Caco-2 (cell line): ENCODE measurements at regions of chr2 and their contacts with region 1.

Region 1: DNA sequence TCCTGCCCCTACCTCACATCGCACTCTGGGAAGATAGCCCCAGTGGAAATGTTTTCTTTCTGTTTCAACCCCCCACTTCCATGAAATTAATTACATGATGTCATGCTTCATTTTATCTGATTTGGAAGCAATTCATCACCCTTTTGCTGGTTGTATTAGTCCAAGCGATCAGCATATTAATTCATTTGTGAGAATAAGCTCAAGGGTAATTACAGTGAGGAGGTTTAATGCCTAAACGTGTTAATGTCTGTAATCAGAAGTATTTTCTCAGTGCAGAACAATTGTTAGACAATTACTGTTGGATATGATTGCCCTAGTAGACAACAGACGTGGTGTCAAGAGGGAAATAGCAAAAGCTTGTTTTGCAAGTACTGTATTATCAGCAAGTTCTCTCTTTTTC is 746.3 kb downstream of the CPS1 start:
- DNase-seq: no peak
- H3K4me3 ChIP-seq: no peak overlapping the region
- H3K4me3 Mint-ChIP-seq: no peak overlapping the region
- H3K27ac Mint-ChIP-seq: no peak overlapping the region
- H3K4me1 ChIP-seq: peaks cover 33% of the 10 kb centered on the region
- H3K4me1 Mint-ChIP-seq: peaks cover 17% of the 10 kb centered on the region
- H3K27me3 ChIP-seq: no peaks in the 10 kb centered on the region
- H3K27me3 Mint-ChIP-seq: no peaks in the 10 kb centered on the region
- CTCF ChIP-seq: no peak

Region 2: DNA sequence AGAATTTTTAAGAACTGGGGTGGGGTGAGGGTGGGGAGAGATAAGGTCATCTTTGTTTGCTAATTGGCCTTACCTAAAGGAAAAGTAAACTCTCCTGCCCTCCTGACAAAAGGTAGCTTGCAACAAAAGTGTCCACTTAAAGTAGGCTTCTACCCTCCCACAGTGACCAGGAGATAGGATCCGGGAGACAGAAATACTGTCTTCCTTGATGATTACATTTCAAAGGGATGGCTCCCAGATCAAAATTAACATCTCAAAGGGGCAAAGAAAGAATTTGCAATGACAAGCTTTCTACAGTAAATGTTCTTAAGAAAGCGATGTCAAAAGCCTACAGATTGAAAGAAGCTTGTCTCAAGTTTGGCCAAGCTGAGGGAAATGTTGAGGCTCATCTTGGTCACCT is 29.1 kb after region 1 on chr2:
- CTCF ChIA-PET with region 1: interaction called, 11 read pairs
- POLR2A ChIA-PET with region 1: no interaction called
- intact Hi-C with region 1: no loop called
- DNase-seq: peak in 1 of 2 experiments; percentile 12
- H3K4me3 ChIP-seq: no peak overlapping the region
- H3K4me3 Mint-ChIP-seq: no peak overlapping the region
- H3K27ac Mint-ChIP-seq: no peak overlapping the region
- H3K4me1 ChIP-seq: peaks cover 5% of the 10 kb centered on the region; the same call in 1 of the 2 replicates
- H3K4me1 Mint-ChIP-seq: no peaks in the 10 kb centered on the region
- H3K27me3 ChIP-seq: no peaks in the 10 kb centered on the region
- H3K27me3 Mint-ChIP-seq: no peaks in the 10 kb centered on the region
- CTCF ChIP-seq: no peak

Region 3: GRCh38 chr2:211396815-211397214 is 94.1 kb after region 1 on chr2:
- CTCF ChIA-PET with region 1: no interaction called
- POLR2A ChIA-PET with region 1: no interaction called
- intact Hi-C with region 1: no loop called
- DNase-seq: no peak
- H3K4me3 ChIP-seq: no peak overlapping the region
- H3K4me3 Mint-ChIP-seq: no peak overlapping the region
- H3K27ac Mint-ChIP-seq: no peak overlapping the region
- H3K4me1 ChIP-seq: no peaks in the 10 kb centered on the region
- H3K4me1 Mint-ChIP-seq: peaks cover 5% of the 10 kb centered on the region
- H3K27me3 ChIP-seq: no peaks in the 10 kb centered on the region
- H3K27me3 Mint-ChIP-seq: no peaks in the 10 kb centered on the region
- CTCF ChIP-seq: no peak